Naive thymus-derived CD4-positive, alpha-beta T cell (primary cell): ENCODE measurements at regions of chr10 and their contacts with region 1.

Region 1: DNA sequence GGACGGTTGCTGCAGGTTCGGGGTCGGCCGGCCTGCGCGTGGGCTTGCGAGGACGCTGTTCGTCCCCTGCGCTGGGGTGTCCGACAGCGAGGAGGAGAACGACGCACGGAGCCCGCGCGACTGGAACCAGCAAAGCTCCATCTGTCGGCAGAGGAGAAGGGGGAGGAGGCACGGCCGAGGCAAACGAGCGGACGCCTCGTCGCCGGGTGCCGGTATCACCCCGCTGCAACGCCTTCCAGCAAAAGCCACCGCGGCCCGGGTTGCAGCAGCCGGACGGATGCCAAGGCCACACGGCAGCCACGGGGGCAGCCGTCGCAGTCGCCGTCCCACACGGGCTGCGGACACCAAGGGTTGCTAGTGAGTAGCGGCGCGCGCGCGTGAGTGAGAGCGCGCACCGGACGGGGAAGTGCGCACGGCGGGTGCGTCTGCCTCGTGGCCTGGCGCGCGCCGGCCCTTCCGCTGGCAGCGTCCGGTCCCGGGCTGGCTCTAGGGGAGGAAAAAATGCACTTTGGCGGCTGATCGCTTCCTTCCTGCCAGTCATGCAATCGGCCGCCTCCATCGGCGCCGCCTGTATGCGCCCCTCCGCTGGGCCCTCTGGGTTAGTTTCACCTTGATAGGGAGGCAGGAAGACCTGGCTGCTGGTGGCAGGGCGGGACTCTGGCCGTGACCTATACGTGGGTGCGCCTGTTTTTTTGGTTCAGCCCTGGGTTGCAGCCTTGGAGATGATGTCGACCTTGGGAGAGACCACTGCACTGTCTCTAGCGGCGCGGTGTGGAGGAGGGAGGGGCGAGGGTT is 434 bp downstream of the STAMBPL1 start:
- DNase-seq: peak; percentile 58 to 79 (median 75)
- ATAC-seq: peak; percentile 84
- H3K4me3 ChIP-seq: peak overlapping the region; percentile 85
- H3K4me3 Mint-ChIP-seq: peak overlapping the region; percentile 95 to 100 (median 98)
- H3K27ac ChIP-seq: peak overlapping the region; percentile 74
- H3K27ac Mint-ChIP-seq: peak overlapping the region; percentile 82 to 97 (median 95)
- H3K4me1 ChIP-seq: peaks cover 43 to 44% of the 10 kb centered on the region in 2 donors
- H3K4me1 Mint-ChIP-seq: peaks cover 43 to 79% (median 69%) of the 10 kb centered on the region in 7 donors
- H3K27me3 ChIP-seq: no peaks in the 10 kb centered on the region
- H3K27me3 Mint-ChIP-seq: no peaks in the 10 kb centered on the region

Region 2: GRCh38 chr10:88687853-88688467 is 192.5 kb before region 1 on chr10:
- CTCF ChIA-PET with region 1: interaction called, 3 read pairs
- POLR2A ChIA-PET with region 1: interaction called, 6 read pairs
- intact Hi-C with region 1: loop called in 1 of 2 experiments (anchors 5 kb)
- DNase-seq: peak in 5 of 9 donors; percentile 7 to 38 (median 18)
- ATAC-seq: peak; percentile 70
- H3K4me3 ChIP-seq: no peak overlapping the region
- H3K4me3 Mint-ChIP-seq: no peak overlapping the region
- H3K27ac ChIP-seq: no peak overlapping the region
- H3K27ac Mint-ChIP-seq: no peak overlapping the region
- H3K4me1 ChIP-seq: no peaks in the 10 kb centered on the region
- H3K4me1 Mint-ChIP-seq: no peaks in the 10 kb centered on the region
- H3K27me3 ChIP-seq: no peaks in the 10 kb centered on the region
- H3K27me3 Mint-ChIP-seq: peaks cover 7 to 30% (median 7%) of the 10 kb centered on the region in 5 donors

Region 3: DNA sequence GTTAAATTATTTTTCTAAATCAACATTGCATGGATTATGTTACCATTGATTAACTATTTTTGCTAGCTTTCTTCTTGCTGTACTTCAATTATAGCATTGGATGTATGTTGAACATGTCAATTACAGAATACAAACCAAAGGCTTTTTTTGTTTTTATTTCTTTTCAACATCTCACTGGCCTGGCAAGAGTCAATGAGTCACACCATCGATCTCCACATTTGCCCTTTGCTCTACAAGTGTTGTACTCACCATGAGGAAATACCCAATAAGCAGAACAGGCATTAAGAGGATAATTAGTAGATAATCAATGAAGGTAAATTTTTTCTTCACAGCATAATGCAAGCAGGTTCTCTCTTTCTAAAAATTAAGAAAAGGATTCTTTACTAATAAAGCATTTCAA is 52.2 kb before region 1 on chr10:
- CTCF ChIA-PET with region 1: interaction called, 16 read pairs
- POLR2A ChIA-PET with region 1: interaction called, 9 read pairs
- intact Hi-C with region 1: no loop called
- DNase-seq: no peak
- ATAC-seq: no peak
- H3K4me3 ChIP-seq: no peak overlapping the region
- H3K4me3 Mint-ChIP-seq: no peak overlapping the region
- H3K27ac ChIP-seq: no peak overlapping the region
- H3K27ac Mint-ChIP-seq: peak overlapping the region in 2 of 9 donors; percentile 49 to 98
- H3K4me1 ChIP-seq: peaks cover 40 to 68% of the 10 kb centered on the region in 2 donors
- H3K4me1 Mint-ChIP-seq: peaks cover 32 to 80% (median 73%) of the 10 kb centered on the region in 7 donors
- H3K27me3 ChIP-seq: no peaks in the 10 kb centered on the region
- H3K27me3 Mint-ChIP-seq: no peaks in the 10 kb centered on the region

Region 4: GRCh38 chr10:88865281-88865876 is 15.1 kb before region 1 on chr10:
- CTCF ChIA-PET with region 1: interaction called, 3 read pairs
- POLR2A ChIA-PET with region 1: interaction called, 4 read pairs
- intact Hi-C with region 1: loop called in 1 of 2 experiments (anchors 2 kb)
- DNase-seq: no peak
- ATAC-seq: no peak
- H3K4me3 ChIP-seq: no peak overlapping the region
- H3K4me3 Mint-ChIP-seq: no peak overlapping the region
- H3K27ac ChIP-seq: no peak overlapping the region
- H3K27ac Mint-ChIP-seq: no peak overlapping the region
- H3K4me1 ChIP-seq: no peaks in the 10 kb centered on the region
- H3K4me1 Mint-ChIP-seq: peaks cover 0 to 10% (median 0%) of the 10 kb centered on the region in 7 donors
- H3K27me3 ChIP-seq: no peaks in the 10 kb centered on the region
- H3K27me3 Mint-ChIP-seq: peaks cover 0 to 37% (median 14%) of the 10 kb centered on the region in 5 donors

Region 5: GRCh38 chr10:89183571-89183970 is 303.1 kb after region 1 on chr10:
- CTCF ChIA-PET with region 1: no interaction called
- POLR2A ChIA-PET with region 1: no interaction called
- intact Hi-C with region 1: no loop called
- DNase-seq: no peak
- ATAC-seq: no peak
- H3K4me3 ChIP-seq: no peak overlapping the region
- H3K4me3 Mint-ChIP-seq: no peak overlapping the region
- H3K27ac ChIP-seq: no peak overlapping the region
- H3K27ac Mint-ChIP-seq: no peak overlapping the region
- H3K4me1 ChIP-seq: no peaks in the 10 kb centered on the region
- H3K4me1 Mint-ChIP-seq: no peaks in the 10 kb centered on the region
- H3K27me3 ChIP-seq: no peaks in the 10 kb centered on the region
- H3K27me3 Mint-ChIP-seq: peaks cover 0 to 37% (median 9%) of the 10 kb centered on the region in 5 donors